Heart right ventricle (tissue), 16 donors: ENCODE measurements at regions of chr14 and their contacts with region 1.

Region 1: DNA sequence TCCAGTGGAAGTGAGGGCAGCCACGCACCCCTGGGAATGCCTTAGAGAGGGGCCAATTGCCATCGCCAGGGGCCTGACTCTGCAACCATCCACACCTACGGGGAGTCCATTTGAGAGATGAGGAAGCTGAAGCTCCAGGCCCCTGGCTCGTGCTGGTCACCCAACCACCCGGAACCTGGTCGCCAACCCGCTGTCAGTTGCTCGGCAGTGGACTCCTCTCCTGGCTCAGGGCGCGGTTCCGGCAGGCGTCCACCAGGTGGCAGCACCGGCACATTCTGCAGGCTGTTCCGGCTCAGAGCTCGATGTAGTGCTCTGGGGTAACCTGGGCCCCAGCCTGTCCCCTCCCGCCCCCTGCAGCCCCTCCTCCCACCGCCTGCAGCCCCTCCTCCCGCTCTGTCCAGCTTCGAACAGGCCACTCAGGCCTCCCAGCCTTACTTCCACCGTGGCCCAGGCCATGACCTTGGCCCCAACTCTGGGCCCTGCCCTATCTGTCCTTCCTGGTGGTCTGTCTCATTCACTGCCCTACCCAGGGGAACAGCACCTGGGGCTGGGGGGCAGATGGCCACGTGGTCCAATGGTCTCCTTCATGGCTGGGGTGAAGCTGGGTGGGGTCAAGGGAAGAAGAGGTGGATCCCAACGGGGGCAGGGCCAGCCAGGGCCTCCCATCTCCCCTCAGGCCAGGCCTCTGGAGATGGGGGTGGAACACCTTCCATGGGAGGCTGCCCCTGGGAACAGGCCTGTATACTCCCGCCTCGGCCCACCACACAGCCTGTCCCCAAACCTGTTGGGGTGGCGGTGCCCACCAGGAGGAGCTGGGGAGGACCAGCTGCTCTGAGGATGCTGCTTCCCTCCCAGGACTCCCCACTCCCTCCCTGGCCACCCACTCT is 15.7 kb downstream of the SIVA1 start:
- DNase-seq: peak; percentile 89 to 92
- ATAC-seq: peak; percentile 88 to 95 (median 91)
- H3K4me3 ChIP-seq: no peak overlapping the region
- H3K27ac ChIP-seq: peak overlapping the region in 3 of 10 donors; percentile 56 to 65 (median 60)
- H3K4me1 ChIP-seq: peaks cover 0 to 14% (median 10%) of the 10 kb centered on the region in 9 donors
- H3K27me3 ChIP-seq: no peaks in the 10 kb centered on the region
- CTCF ChIP-seq: peak; percentile 89 to 98 (median 97)

Region 2: DNA sequence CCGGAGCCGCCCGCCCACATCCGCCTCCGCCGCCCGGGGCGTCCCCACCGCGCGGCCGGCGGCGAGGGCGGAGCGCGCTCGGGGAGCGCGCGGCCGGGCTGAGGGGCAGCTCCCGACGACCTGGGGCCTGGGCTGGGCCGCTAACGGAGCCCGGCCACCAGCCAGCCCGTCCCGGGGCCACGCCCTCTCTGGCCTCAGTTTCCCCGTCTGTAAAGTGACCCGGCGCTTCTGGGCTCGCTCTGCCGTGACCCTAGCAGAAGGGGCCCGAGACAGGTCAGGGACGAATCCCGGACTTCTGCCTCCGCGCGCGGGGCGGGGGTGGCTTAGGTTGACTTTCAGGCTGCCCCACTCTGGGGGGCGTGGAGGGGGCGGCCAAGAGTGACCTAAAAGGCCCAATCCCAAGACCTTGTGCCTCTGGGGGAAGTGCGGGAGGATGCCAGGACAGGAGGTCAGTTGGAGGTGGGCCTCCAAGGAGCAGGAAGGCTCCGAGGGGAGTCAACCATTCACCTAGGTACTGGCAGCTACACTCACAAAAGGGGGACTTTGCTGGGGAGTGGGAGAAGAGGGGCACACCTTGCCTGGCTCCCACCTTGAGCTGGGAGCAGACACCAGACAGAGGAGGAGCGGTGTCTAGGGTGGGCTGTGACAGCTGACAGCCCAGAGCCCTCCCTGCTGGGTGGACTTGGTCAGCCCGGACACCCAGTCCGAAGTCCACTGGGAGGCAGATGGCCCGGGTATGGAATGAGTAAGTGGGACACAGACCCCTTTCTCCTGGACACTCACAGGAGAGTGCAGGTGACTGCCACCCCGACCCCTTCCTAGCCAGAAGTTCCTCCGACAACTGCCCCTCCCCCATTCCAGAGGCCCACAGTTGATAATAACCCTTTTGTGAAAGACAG is 27.4 kb after region 1 on chr14:
- intact Hi-C with region 1: loop called in 1 of 10 experiments (anchors 2 kb)
- DNase-seq: peak; percentile 50 to 76
- ATAC-seq: peak in 7 of 8 donors; percentile 4 to 62 (median 31)
- H3K4me3 ChIP-seq: peak overlapping the region; percentile 36 to 70 (median 58)
- H3K27ac ChIP-seq: peak overlapping the region; percentile 77 to 99 (median 92)
- H3K4me1 ChIP-seq: peaks cover 34 to 77% (median 66%) of the 10 kb centered on the region in 9 donors
- H3K27me3 ChIP-seq: no peaks in the 10 kb centered on the region
- CTCF ChIP-seq: no peak

Region 3: GRCh38 chr14:104820669-104821228 is 52.1 kb after region 1 on chr14:
- intact Hi-C with region 1: loop called in 5 of 10 experiments (anchors 2 kb)
- DNase-seq: peak in 1 of 2 donors; percentile 44
- ATAC-seq: peak in 6 of 8 donors; percentile 16 to 60 (median 44)
- H3K4me3 ChIP-seq: no peak overlapping the region
- H3K27ac ChIP-seq: no peak overlapping the region
- H3K4me1 ChIP-seq: peaks cover 0 to 27% (median 19%) of the 10 kb centered on the region in 9 donors
- H3K27me3 ChIP-seq: peaks cover 0 to 10% (median 0%) of the 10 kb centered on the region in 7 donors
- CTCF ChIP-seq: peak; percentile 19 to 67 (median 51)

Region 4: DNA sequence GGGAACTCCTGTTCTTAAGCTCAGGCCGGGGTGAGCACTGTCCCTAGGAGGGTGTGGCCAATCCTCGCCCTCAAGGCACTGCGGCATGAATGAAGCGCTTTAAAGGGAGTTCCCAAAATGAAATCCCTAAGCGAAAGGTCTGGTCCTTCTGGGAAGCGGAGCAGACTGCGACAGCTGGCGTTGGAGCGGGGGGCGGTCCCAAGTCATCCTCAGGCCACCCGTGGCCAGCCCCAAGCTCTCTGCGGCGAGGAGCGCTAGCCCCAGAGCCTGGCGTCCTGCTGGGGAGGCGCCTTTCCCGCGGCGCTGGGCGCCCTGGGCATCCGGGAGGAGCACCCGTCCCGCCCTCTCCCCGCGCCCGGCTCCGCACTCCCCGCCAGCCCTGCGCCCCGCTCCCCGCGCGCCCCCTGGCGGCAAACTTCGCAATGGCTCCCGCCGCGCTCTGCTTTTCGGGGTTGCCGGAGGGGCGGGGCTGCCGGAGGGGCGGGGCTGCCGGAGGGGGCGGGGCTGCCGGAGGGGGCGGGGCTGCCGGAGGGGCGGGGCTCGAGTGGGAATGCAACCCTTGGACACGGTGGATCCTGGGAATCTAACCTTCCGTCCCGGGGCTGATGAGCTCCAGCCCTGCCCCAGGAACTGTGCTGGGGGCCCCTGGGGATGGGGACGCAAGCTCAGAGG is 57.6 kb after region 1 on chr14:
- intact Hi-C with region 1: loop called in 9 of 10 experiments (anchors 1 to 2 kb)
- DNase-seq: peak; percentile 90 to 95
- ATAC-seq: peak; percentile 90 to 95 (median 92)
- H3K4me3 ChIP-seq: peak overlapping the region; percentile 41 to 82 (median 65)
- H3K27ac ChIP-seq: peak overlapping the region in 7 of 10 donors; percentile 22 to 60 (median 41)
- H3K4me1 ChIP-seq: peaks cover 0 to 25% (median 22%) of the 10 kb centered on the region in 9 donors
- H3K27me3 ChIP-seq: peaks cover 0 to 27% (median 0%) of the 10 kb centered on the region in 7 donors
- CTCF ChIP-seq: peak; percentile 71 to 97 (median 89)

Region 5: DNA sequence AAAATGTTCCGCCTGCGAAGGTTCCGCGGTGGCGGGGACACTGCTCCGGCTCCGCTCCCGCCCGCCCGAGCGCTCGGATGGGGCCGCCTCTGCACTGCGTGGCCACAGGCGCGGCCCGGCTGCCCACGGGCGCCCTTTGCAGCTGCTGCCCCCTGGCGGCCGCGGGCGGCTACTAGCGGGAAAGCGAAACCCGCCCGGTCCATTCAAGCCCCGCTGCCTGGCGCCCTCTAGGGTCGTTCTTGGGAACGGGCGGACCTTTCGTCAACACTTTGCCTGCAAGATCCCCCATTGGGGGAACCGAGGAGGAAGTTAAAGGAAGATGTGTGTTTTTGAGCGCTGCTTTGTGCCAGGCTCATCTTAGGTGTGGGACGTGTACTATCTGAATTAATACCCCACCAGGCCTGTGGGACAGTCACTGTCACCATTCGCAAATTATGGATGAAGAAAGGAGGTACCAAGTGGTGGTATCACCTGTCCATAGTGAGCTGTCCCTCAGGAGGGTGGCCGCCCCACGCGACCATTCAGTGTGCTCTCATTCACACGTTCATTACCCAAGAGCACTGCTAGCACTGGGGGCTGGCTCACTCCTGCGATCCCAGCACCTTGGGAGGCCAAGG is 277.1 kb after region 1 on chr14:
- intact Hi-C with region 1: loop called in 1 of 10 experiments (anchors 10 kb)
- DNase-seq: peak; percentile 91 to 92
- ATAC-seq: peak; percentile 86 to 96 (median 93)
- H3K4me3 ChIP-seq: peak overlapping the region in 1 of 10 donors; percentile 15
- H3K27ac ChIP-seq: no peak overlapping the region
- H3K4me1 ChIP-seq: peaks cover 0 to 23% (median 0%) of the 10 kb centered on the region in 9 donors
- H3K27me3 ChIP-seq: peaks cover 0 to 26% (median 0%) of the 10 kb centered on the region in 7 donors
- CTCF ChIP-seq: peak in 8 of 9 donors; percentile 99 to 100 (median 100)

Region 6: GRCh38 chr14:105290621-105291346 is 522.1 kb after region 1 on chr14:
- intact Hi-C with region 1: no loop called
- DNase-seq: no peak
- ATAC-seq: no peak
- H3K4me3 ChIP-seq: no peak overlapping the region
- H3K27ac ChIP-seq: no peak overlapping the region
- H3K4me1 ChIP-seq: peaks cover 9 to 47% (median 29%) of the 10 kb centered on the region in 9 donors
- H3K27me3 ChIP-seq: no peaks in the 10 kb centered on the region
- CTCF ChIP-seq: no peak

Region 7: GRCh38 chr14:105358140-105358846 is 589.6 kb after region 1 on chr14:
- intact Hi-C with region 1: no loop called
- DNase-seq: no peak
- ATAC-seq: peak in 4 of 8 donors; percentile 5 to 34 (median 22)
- H3K4me3 ChIP-seq: no peak overlapping the region
- H3K27ac ChIP-seq: no peak overlapping the region
- H3K4me1 ChIP-seq: no peaks in the 10 kb centered on the region
- H3K27me3 ChIP-seq: no peaks in the 10 kb centered on the region
- CTCF ChIP-seq: no peak